Heart right ventricle (tissue), 16 donors: ENCODE measurements at regions of chr9 and their contacts with region 1.

Region 1: GRCh38 chr9:14466429-14466818 is 152.5 kb upstream of the NFIB start:
- DNase-seq: no peak
- ATAC-seq: no peak
- H3K4me3 ChIP-seq: no peak overlapping the region
- H3K27ac ChIP-seq: no peak overlapping the region
- H3K4me1 ChIP-seq: no peaks in the 10 kb centered on the region
- H3K27me3 ChIP-seq: no peaks in the 10 kb centered on the region
- CTCF ChIP-seq: no peak

Region 2: DNA sequence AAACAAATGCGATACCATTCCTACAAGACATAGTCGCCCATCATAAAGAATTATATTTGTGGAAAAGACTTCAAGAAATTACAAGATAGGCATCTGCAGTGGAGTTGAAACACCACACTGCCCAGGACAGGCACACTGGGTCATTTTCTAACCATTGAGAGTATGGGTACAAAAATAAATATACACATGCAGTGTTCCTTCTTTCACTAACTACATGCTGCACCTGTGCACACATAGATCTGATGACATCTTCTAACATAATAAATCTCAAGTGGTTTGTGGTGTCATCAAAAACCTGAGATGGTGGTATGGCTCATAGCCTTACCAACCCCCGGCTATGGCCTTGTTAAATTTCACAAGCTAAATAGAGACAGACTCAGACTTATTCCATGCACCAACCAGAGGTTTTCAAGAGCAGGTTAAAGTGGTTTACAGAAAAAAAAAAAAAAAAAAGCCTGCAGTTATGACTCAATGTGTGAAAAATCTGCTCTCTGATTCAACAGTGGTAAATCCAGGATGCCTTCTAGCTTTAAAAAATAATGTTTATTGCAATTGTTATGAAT is 140.1 kb before region 1 on chr9:
- intact Hi-C with region 1: no loop called
- DNase-seq: no peak
- ATAC-seq: no peak
- H3K4me3 ChIP-seq: no peak overlapping the region
- H3K27ac ChIP-seq: peak overlapping the region in 3 of 10 donors; percentile 24 to 100 (median 26)
- H3K4me1 ChIP-seq: peaks cover 0 to 48% (median 29%) of the 10 kb centered on the region in 9 donors
- H3K27me3 ChIP-seq: peaks cover 0 to 20% (median 0%) of the 10 kb centered on the region in 7 donors
- CTCF ChIP-seq: no peak

Region 3: GRCh38 chr9:14561929-14562405 is 95.5 kb after region 1 on chr9:
- intact Hi-C with region 1: loop called in 1 of 10 experiments (anchors 10 kb)
- DNase-seq: no peak
- ATAC-seq: no peak
- H3K4me3 ChIP-seq: no peak overlapping the region
- H3K27ac ChIP-seq: no peak overlapping the region
- H3K4me1 ChIP-seq: no peaks in the 10 kb centered on the region
- H3K27me3 ChIP-seq: no peaks in the 10 kb centered on the region
- CTCF ChIP-seq: no peak

Region 4: GRCh38 chr9:14652729-14653377 is 186.4 kb after region 1 on chr9:
- intact Hi-C with region 1: loop called in 8 of 10 experiments (anchors 5 to 10 kb)
- DNase-seq: no peak
- ATAC-seq: no peak
- H3K4me3 ChIP-seq: no peak overlapping the region
- H3K27ac ChIP-seq: no peak overlapping the region
- H3K4me1 ChIP-seq: no peaks in the 10 kb centered on the region
- H3K27me3 ChIP-seq: no peaks in the 10 kb centered on the region
- CTCF ChIP-seq: peak; percentile 11 to 63 (median 49)

Region 5: DNA sequence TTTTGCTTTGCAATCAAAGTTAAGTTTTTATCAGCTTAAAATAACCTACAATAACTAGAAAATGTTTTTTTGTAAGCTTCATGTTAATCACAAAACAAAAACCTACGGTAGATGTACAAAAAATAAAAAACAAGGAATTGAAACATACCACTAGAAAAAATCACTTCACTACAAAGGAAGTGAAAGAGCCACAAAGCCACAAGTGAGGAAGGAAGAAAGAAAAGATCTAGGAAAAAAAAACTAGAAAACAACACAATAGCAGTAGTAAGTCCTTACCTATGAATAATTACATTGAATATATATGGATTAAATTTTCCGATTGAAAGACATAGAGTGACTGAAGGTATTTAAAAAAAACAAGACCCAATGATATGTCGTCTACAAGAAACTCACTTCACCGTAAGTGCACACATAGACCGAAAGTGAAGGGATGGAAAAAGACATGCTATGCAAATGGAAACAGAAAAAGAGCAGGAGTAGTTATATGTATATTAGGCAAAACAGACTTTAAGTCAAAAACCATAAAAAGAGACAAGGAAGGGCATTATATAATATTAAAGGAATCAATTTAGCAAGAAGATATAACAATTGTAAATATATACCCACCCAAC is 240.2 kb after region 1 on chr9:
- intact Hi-C with region 1: no loop called
- DNase-seq: no peak
- ATAC-seq: no peak
- H3K4me3 ChIP-seq: no peak overlapping the region
- H3K27ac ChIP-seq: no peak overlapping the region
- H3K4me1 ChIP-seq: no peaks in the 10 kb centered on the region
- H3K27me3 ChIP-seq: peaks cover 0 to 12% (median 0%) of the 10 kb centered on the region in 7 donors
- CTCF ChIP-seq: no peak